ENCODE measurements at regions of chr9 and their contacts with region 1.

Region 1: GRCh38 chr9:130866474-130866965 is 30.1 kb downstream of the QRFP start:
- DNase-seq: peak; percentile 79 to 93
- ATAC-seq: peak; percentile 97
- H3K4me3 ChIP-seq: no peak overlapping the region
- H3K27ac ChIP-seq: no peak overlapping the region
- H3K4me1 ChIP-seq: no peaks in the 10 kb centered on the region
- CTCF ChIP-seq: peak; percentile 95
- EP300 ChIP-seq: no peak
- POLR2A ChIP-seq: no peak
- RAD21 ChIP-seq: peak; percentile 76 to 78

Region 2: GRCh38 chr9:130712564-130713285 is 153.8 kb before region 1 on chr9:
- CTCF ChIA-PET with region 1: interaction called, 176 read pairs
- POLR2A ChIA-PET with region 1: interaction called, 3 read pairs
- DNase-seq: peak; percentile 99
- ATAC-seq: peak; percentile 98
- H3K4me3 ChIP-seq: peak overlapping the region; percentile 90
- H3K27ac ChIP-seq: peak overlapping the region; percentile 95 to 97
- H3K4me1 ChIP-seq: peaks cover 30% of the 10 kb centered on the region; the same call in 2 of the 3 replicates
- CTCF ChIP-seq: no peak
- EP300 ChIP-seq: no peak
- POLR2A ChIP-seq: peak; percentile 61
- RAD21 ChIP-seq: no peak

Region 3: DNA sequence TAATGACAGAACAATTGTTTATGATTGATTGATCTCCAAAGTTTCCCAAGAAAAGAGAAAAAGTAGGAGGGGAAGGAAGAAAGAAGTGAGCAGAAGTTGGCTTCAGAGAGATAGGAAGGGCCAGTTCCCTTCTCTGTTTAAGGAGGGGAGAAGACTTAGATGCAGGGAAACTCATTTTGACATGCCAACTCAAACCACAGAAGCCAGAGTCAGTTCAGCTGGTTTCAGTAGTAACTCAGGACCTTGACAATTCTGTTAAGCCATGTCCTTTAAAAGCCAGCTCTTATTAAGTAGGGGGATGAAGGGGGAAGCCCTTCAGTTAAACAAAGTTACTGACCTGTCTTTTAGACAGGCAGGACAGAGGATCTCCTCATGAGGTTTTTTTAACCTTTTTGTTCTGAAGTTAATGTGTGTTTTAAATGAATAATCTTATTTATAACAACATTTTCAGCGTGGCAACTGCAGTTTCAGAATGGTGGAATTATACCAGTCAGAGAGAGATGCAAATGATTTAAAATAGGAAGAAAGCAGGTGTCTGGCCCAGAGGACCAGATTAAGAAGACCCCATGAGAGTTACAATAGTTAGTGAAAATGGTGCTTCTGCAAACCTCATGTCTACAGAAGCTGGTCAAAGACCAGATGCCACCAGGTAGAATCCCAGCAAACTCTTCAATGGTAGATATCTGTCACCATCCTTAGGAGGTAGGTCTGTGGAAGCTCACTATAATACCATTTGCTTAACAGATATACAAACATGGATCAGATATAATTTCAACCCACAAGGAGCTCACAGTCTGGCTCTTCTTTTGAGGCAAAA is 60.8 kb before region 1 on chr9:
- CTCF ChIA-PET with region 1: interaction called, 13 read pairs
- POLR2A ChIA-PET with region 1: no interaction called
- DNase-seq: no peak
- ATAC-seq: no peak
- H3K4me3 ChIP-seq: no peak overlapping the region
- H3K27ac ChIP-seq: no peak overlapping the region
- H3K4me1 ChIP-seq: no peaks in the 10 kb centered on the region
- CTCF ChIP-seq: no peak
- EP300 ChIP-seq: no peak
- POLR2A ChIP-seq: no peak
- RAD21 ChIP-seq: no peak

Region 4: DNA sequence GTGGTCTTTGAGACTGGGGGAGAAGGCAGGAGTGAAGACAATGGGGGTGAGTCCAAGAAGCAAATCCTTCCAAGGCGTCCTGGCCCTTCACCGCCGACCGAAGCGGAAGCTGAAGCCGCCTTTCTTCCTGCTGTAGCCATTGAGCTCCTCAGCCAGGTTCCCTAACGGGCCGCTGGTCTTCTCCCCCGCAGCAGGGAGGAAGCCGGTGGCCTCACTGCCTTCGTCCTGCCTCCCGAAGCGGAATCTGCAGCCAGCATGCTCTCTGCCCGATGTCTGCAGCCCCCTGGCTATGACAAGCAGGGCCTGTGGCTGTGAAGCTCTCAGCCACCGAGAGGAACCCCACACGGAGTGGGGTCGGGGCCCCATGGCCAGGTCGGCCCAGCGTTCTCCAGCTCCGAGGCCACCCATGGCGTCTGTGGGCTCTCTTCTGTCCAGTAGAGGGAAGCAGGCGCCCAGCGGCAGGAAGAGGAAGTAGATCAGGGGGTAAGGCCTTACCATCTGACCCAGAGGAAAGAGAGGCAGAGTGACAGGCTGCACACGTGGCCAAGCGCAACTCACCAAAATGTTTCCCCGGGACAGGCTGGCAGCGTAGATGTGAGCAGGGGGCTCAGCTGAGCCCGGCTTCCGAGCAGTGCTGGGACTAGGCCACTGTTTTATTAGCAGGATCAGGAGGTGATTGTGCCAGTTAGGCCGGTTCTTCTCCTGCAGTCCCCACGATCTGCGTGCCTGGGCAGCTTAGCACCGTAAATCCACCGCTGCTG is 27.0 kb after region 1 on chr9:
- CTCF ChIA-PET with region 1: interaction called, 29 read pairs
- POLR2A ChIA-PET with region 1: no interaction called
- DNase-seq: peak; percentile 35 to 67
- ATAC-seq: peak; percentile 63 to 79
- H3K4me3 ChIP-seq: no peak overlapping the region
- H3K27ac ChIP-seq: 0 out of 6 replicates have a peak overlapping the region, but pooled peaks of 1 of the 2 experiments have one; percentile 21
- H3K4me1 ChIP-seq: no peaks in the 10 kb centered on the region
- CTCF ChIP-seq: peak; percentile 48
- EP300 ChIP-seq: no peak
- POLR2A ChIP-seq: no peak
- RAD21 ChIP-seq: peak; percentile 73 to 82

Region 5: DNA sequence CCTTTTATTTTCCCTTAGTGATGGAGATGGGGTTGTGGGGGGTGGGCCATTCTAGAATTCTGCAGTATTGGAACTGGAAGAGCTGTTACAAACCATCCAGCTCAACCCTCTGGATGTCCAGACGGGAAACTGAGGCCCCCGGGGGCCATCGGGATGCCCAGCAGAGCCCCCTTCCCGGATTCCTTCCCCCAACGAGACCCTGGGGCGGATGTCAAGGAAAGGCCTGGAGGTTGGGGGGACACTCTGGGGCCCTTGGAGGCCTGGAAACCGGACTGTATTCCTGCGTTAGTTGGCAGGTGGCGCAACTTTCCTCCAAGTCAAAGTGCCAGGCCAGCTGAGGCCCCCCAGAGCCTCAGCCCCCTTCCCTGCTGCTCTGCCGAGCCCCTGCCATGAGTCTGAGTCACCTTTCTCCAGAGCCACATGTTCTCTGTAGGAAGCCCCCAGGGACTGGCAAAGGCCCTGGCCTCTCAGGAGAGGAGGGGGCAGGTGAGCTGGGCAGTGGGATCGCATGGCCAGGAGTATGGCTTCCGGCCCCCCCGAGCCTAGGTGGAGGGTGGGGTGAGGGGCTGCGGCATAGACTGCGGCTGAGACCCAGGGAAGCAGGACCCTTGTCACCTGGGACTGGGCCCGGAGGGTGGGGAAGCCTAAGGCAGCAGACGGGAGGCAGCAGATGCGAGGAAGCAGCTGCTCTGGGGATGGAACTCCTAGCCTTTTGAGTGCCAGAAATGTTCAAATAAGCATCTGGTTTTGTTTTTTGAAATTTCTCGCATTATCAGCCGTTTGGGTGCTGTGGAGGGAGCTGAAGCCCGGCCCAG is 90.3 kb after region 1 on chr9:
- CTCF ChIA-PET with region 1: interaction called, 16 read pairs
- POLR2A ChIA-PET with region 1: no interaction called
- DNase-seq: no peak
- ATAC-seq: no peak
- H3K4me3 ChIP-seq: no peak overlapping the region
- H3K27ac ChIP-seq: no peak overlapping the region
- H3K4me1 ChIP-seq: peaks cover 2% of the 10 kb centered on the region
- CTCF ChIP-seq: no peak
- EP300 ChIP-seq: no peak
- POLR2A ChIP-seq: no peak
- RAD21 ChIP-seq: no peak

Region 6: GRCh38 chr9:130990978-130991777 is 124.7 kb after region 1 on chr9:
- CTCF ChIA-PET with region 1: interaction called, 286 read pairs
- POLR2A ChIA-PET with region 1: no interaction called
- DNase-seq: no peak
- ATAC-seq: no peak
- H3K4me3 ChIP-seq: no peak overlapping the region
- H3K27ac ChIP-seq: no peak overlapping the region; a peak in 1 of 6 replicates
- H3K4me1 ChIP-seq: peaks cover 18% of the 10 kb centered on the region
- CTCF ChIP-seq: no peak
- EP300 ChIP-seq: no peak
- POLR2A ChIP-seq: no peak
- RAD21 ChIP-seq: no peak

Measured in A549 (cell line).